H1 (cell line): ENCODE measurements at regions of chr5 and their contacts with region 1.

Region 1: GRCh38 chr5:170183816-170184687 is 48.7 kb upstream of the C5orf58 start:
- DNase-seq: peak; percentile 43 to 90
- H3K4me3 ChIP-seq: no peak overlapping the region
- H3K27ac ChIP-seq: no peak overlapping the region
- H3K4me1 ChIP-seq: no peaks in the 10 kb centered on the region
- H3K27me3 ChIP-seq: no peaks in the 10 kb centered on the region
- CTCF ChIP-seq: peak; percentile 82 to 96 (median 95)
- EP300 ChIP-seq: no peak; a peak in 1 of 3 replicates
- POLR2A ChIP-seq: no peak
- RAD21 ChIP-seq: peak; percentile 98 to 99

Region 2: GRCh38 chr5:170080217-170080616 is 103.8 kb before region 1 on chr5:
- CTCF ChIA-PET with region 1: interaction called, 13 read pairs
- POLR2A ChIA-PET with region 1: no interaction called
- DNase-seq: no peak
- H3K4me3 ChIP-seq: no peak overlapping the region
- H3K27ac ChIP-seq: no peak overlapping the region
- H3K4me1 ChIP-seq: no peaks in the 10 kb centered on the region
- H3K27me3 ChIP-seq: no peaks in the 10 kb centered on the region
- CTCF ChIP-seq: no peak
- EP300 ChIP-seq: no peak
- POLR2A ChIP-seq: no peak
- RAD21 ChIP-seq: no peak

Region 3: DNA sequence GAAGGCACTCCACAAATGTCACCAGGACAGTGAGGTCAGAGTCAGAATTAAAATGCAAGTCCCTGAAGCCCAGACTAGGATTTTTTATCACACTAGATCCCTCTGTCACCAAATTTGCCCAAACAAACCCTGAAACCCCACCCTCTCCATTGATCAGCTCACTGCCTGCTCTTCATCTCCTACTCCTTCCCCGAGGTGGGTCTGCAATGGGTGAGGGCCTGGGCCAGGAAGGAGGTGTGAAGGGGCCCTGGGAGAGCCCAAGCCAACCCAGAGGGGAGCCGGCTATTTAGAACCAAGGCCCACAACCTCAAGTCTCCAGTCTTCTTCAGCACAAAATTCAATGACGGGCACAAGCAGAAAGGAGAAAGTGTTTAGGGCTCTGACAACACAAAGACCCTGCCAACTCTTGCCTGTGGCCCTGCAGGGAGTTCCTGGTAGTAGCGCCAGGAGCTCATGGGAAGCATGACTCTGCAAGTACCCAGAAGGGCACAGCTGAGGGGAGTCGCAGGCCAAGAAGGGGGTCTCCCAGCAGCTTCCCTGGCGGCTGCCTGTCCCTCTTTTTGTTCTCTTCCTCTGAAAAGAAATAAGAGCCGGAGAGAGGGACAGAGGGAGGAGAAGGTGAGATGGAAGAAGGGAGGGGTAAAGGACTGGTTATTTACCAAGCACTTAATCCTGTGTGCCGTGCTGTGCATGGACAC is 72.8 kb before region 1 on chr5:
- CTCF ChIA-PET with region 1: interaction called, 217 read pairs
- POLR2A ChIA-PET with region 1: no interaction called
- DNase-seq: no peak
- H3K4me3 ChIP-seq: no peak overlapping the region
- H3K27ac ChIP-seq: no peak overlapping the region
- H3K4me1 ChIP-seq: peaks cover 2 to 17% (median 9%) of the 10 kb centered on the region in 4 experiments
- H3K27me3 ChIP-seq: peaks cover 0 to 46% (median 21%) of the 10 kb centered on the region in 4 experiments; a peak in 5 of 7 replicates
- CTCF ChIP-seq: no peak
- EP300 ChIP-seq: no peak
- POLR2A ChIP-seq: no peak
- RAD21 ChIP-seq: no peak

Region 4: GRCh38 chr5:170166101-170166500 is 18.0 kb before region 1 on chr5:
- CTCF ChIA-PET with region 1: interaction called, 14 read pairs
- POLR2A ChIA-PET with region 1: no interaction called
- DNase-seq: no peak
- H3K4me3 ChIP-seq: no peak overlapping the region
- H3K27ac ChIP-seq: no peak overlapping the region
- H3K4me1 ChIP-seq: peaks cover 0 to 2% (median 0%) of the 10 kb centered on the region in 4 experiments; a peak in 1 of 7 replicates
- H3K27me3 ChIP-seq: no peaks in the 10 kb centered on the region; a peak in 2 of 7 replicates
- CTCF ChIP-seq: no peak
- EP300 ChIP-seq: no peak
- POLR2A ChIP-seq: no peak
- RAD21 ChIP-seq: no peak

Region 5: GRCh38 chr5:170195961-170196360 is 11.9 kb after region 1 on chr5:
- CTCF ChIA-PET with region 1: interaction called, 75 read pairs
- POLR2A ChIA-PET with region 1: interaction called, 4 read pairs
- DNase-seq: no peak
- H3K4me3 ChIP-seq: no peak overlapping the region
- H3K27ac ChIP-seq: no peak overlapping the region
- H3K4me1 ChIP-seq: no peaks in the 10 kb centered on the region; a peak in 2 of 7 replicates
- H3K27me3 ChIP-seq: no peaks in the 10 kb centered on the region
- CTCF ChIP-seq: no peak
- EP300 ChIP-seq: no peak
- POLR2A ChIP-seq: no peak
- RAD21 ChIP-seq: no peak